Dorsolateral prefrontal cortex (tissue), 120 donors: ENCODE measurements at regions of chr14 and their contacts with region 1.

Region 1: GRCh38 chr14:28785096-28785952 is 18.7 kb downstream of the FOXG1 start:
- DNase-seq: peak in 7 of 10 donors; percentile 46 to 74 (median 67)
- H3K4me3 ChIP-seq: peak overlapping the region; percentile 31 to 76 (median 63)
- H3K27ac ChIP-seq: peak overlapping the region in 58 of 59 donors; percentile 44 to 97 (median 92)
- H3K27me3 ChIP-seq: peaks cover 0 to 61% (median 17%) of the 10 kb centered on the region in 45 donors
- CTCF ChIP-seq: no peak

Region 2: GRCh38 chr14:28931999-28932398 is 146.7 kb after region 1 on chr14:
- intact Hi-C with region 1: no loop called
- DNase-seq: no peak
- H3K4me3 ChIP-seq: no peak overlapping the region
- H3K27ac ChIP-seq: no peak overlapping the region
- H3K27me3 ChIP-seq: no peaks in the 10 kb centered on the region
- CTCF ChIP-seq: no peak

Region 3: DNA sequence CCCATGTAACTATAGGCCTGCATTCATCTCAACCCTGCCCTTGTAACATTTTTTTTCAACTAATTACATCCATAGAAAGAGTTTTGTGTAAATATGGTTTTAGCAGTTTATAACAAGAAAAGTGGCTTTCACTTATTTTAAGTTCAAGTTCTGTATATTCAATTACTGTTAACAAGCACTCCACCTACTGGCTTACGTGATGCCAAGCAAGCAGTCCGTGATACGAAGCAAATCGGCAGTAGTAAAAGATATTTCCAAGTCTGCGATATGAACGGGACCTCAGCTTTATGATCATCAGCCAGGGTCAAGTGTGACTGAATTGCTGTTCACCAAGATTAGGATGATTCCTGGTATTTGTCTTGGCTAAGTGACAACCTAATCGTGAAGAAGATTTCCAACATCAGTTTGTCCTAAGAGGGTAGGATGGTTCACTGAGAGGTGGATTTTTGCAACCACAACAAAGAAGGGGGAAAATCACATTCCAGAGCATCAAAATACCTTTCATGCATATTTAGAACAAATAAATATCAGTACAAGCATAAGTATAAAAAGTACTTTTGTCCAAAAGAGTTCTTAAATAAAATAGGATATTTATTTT is 437.4 kb after region 1 on chr14:
- intact Hi-C with region 1: loop called in 1 of 2 experiments (anchors 2 kb)
- DNase-seq: peak in 4 of 10 donors; percentile 27 to 52 (median 40)
- H3K4me3 ChIP-seq: peak overlapping the region in 9 of 59 donors; percentile 9 to 35 (median 15)
- H3K27ac ChIP-seq: peak overlapping the region in 11 of 59 donors; percentile 4 to 54 (median 26)
- H3K27me3 ChIP-seq: no peaks in the 10 kb centered on the region
- CTCF ChIP-seq: peak in 54 of 56 donors; percentile 20 to 67 (median 52)